ENCODE measurements at regions of chr18 and their contacts with region 1.

Region 1: DNA sequence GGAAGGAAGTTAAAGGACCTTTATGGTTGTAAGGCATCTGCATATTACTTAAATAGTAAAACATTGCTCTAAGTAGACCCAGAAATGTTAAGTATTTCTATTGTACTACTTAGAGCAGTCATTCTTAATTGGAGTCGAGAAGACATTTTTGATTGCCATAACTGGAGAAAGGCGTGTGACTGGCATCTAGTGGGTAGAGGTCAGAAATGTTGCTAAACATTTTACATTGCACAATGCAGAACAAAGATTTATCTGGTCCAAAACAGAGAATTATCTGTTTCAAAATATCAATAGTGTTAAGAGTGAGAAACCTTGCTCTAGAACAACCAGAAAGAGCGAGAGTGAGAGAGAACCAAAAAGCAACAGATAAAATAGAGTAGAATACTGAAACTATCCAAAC is 23.3 kb upstream of the ROCK1 start:
- DNase-seq: no peak
- ATAC-seq: peak; percentile 49
- H3K4me3 Mint-ChIP-seq: no peak overlapping the region
- H3K27ac Mint-ChIP-seq: no peak overlapping the region
- H3K4me1 Mint-ChIP-seq: no peaks in the 10 kb centered on the region
- H3K27me3 Mint-ChIP-seq: no peaks in the 10 kb centered on the region
- CTCF ChIP-seq: no peak

Region 2: GRCh38 chr18:20971886-20972267 is 163.0 kb before region 1 on chr18:
- CTCF ChIA-PET with region 1: interaction called, 6 read pairs
- POLR2A ChIA-PET with region 1: no interaction called
- intact Hi-C with region 1: loop called (anchors 1 kb)
- DNase-seq: no peak
- ATAC-seq: peak; percentile 47
- H3K4me3 Mint-ChIP-seq: no peak overlapping the region
- H3K27ac Mint-ChIP-seq: no peak overlapping the region
- H3K4me1 Mint-ChIP-seq: no peaks in the 10 kb centered on the region
- H3K27me3 Mint-ChIP-seq: no peaks in the 10 kb centered on the region
- CTCF ChIP-seq: no peak

Region 3: GRCh38 chr18:21179590-21180220 is 44.8 kb after region 1 on chr18:
- CTCF ChIA-PET with region 1: no interaction called
- POLR2A ChIA-PET with region 1: no interaction called
- intact Hi-C with region 1: no loop called
- DNase-seq: no peak
- ATAC-seq: peak; percentile 57
- H3K4me3 Mint-ChIP-seq: no peak overlapping the region
- H3K27ac Mint-ChIP-seq: no peak overlapping the region
- H3K4me1 Mint-ChIP-seq: no peaks in the 10 kb centered on the region
- H3K27me3 Mint-ChIP-seq: no peaks in the 10 kb centered on the region
- CTCF ChIP-seq: no peak

Measured in activated B cell treated with CpG ODN at 0.5 μM for 24 hours (primary cell).